Breast epithelium (tissue), 4 donors: ENCODE measurements at regions of chr10 and their contacts with region 1.

Region 1: DNA sequence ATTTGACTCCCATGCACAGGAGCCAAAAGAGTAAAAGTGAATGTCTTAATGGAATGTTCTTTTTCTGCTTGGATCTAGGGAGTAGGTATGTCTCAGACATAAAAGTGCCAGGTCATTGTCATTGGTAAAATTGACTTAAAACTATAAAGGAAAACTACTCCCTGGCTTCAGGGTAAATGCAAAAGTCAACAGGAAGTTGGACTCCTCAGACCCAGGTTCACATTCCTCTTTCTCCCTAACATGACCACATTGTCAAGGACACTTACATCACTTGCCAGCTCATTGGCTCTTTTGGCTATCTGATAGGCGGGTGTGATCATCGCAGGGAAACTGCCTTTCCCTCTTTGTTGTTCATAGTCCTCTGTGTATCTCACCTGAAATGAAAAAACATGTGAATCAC is 13.7 kb downstream of the NRAP start:
- DNase-seq: no peak
- H3K4me3 ChIP-seq: no peak overlapping the region
- H3K27ac ChIP-seq: no peak overlapping the region
- H3K4me1 ChIP-seq: no peaks in the 10 kb centered on the region
- H3K27me3 ChIP-seq: peaks cover 0 to 6% of the 10 kb centered on the region in 2 donors
- CTCF ChIP-seq: no peak
- POLR2A ChIP-seq: no peak

Region 2: GRCh38 chr10:112349521-112350085 is 1300.6 kb before region 1 on chr10:
- intact Hi-C with region 1: loop called (anchors 5 kb)
- DNase-seq: no peak
- H3K4me3 ChIP-seq: no peak overlapping the region
- H3K27ac ChIP-seq: no peak overlapping the region
- H3K4me1 ChIP-seq: no peaks in the 10 kb centered on the region
- H3K27me3 ChIP-seq: no peaks in the 10 kb centered on the region
- CTCF ChIP-seq: no peak
- POLR2A ChIP-seq: no peak

Region 3: GRCh38 chr10:113158183-113158582 is 492.0 kb before region 1 on chr10:
- intact Hi-C with region 1: no loop called
- DNase-seq: no peak
- H3K4me3 ChIP-seq: no peak overlapping the region
- H3K27ac ChIP-seq: no peak overlapping the region
- H3K4me1 ChIP-seq: no peaks in the 10 kb centered on the region
- H3K27me3 ChIP-seq: no peaks in the 10 kb centered on the region
- CTCF ChIP-seq: no peak
- POLR2A ChIP-seq: no peak

Region 4: GRCh38 chr10:113945075-113945686 is 295.0 kb after region 1 on chr10:
- intact Hi-C with region 1: no loop called
- DNase-seq: peak in 1 of 2 donors; percentile 40
- H3K4me3 ChIP-seq: no peak overlapping the region
- H3K27ac ChIP-seq: peak overlapping the region in 1 of 2 donors; percentile 1
- H3K4me1 ChIP-seq: no peaks in the 10 kb centered on the region
- H3K27me3 ChIP-seq: no peaks in the 10 kb centered on the region
- CTCF ChIP-seq: no peak
- POLR2A ChIP-seq: no peak